Activated CD4-positive, alpha-beta T cell treated with anti-CD3 and anti-CD28 coated beads for 36 hours (primary cell): ENCODE measurements at regions of chr14 and their contacts with region 1.

Region 1: GRCh38 chr14:24630872-24631477 is 3.0 kb downstream of the GZMB start:
- DNase-seq: no peak
- ATAC-seq: peak; percentile 1
- H3K4me3 Mint-ChIP-seq: peak overlapping the region; percentile 78
- H3K27ac Mint-ChIP-seq: peak overlapping the region; percentile 88
- H3K4me1 Mint-ChIP-seq: peaks cover 12% of the 10 kb centered on the region
- H3K27me3 Mint-ChIP-seq: no peaks in the 10 kb centered on the region

Region 2: GRCh38 chr14:24518851-24519250 is 112.1 kb before region 1 on chr14:
- CTCF ChIA-PET with region 1: no interaction called
- POLR2A ChIA-PET with region 1: no interaction called
- intact Hi-C with region 1: no loop called
- DNase-seq: no peak
- ATAC-seq: no peak
- H3K4me3 Mint-ChIP-seq: no peak overlapping the region
- H3K27ac Mint-ChIP-seq: no peak overlapping the region
- H3K4me1 Mint-ChIP-seq: peaks cover 2% of the 10 kb centered on the region
- H3K27me3 Mint-ChIP-seq: peaks cover 7% of the 10 kb centered on the region

Region 3: GRCh38 chr14:24605435-24606190 is 25.4 kb before region 1 on chr14:
- CTCF ChIA-PET with region 1: interaction called, 5 read pairs
- POLR2A ChIA-PET with region 1: no interaction called
- intact Hi-C with region 1: loop called in 1 of 2 experiments (anchors 2 kb)
- DNase-seq: peak; percentile 83
- ATAC-seq: peak; percentile 87
- H3K4me3 Mint-ChIP-seq: peak overlapping the region; percentile 66
- H3K27ac Mint-ChIP-seq: peak overlapping the region; percentile 87
- H3K4me1 Mint-ChIP-seq: peaks cover 40% of the 10 kb centered on the region
- H3K27me3 Mint-ChIP-seq: no peaks in the 10 kb centered on the region

Region 4: DNA sequence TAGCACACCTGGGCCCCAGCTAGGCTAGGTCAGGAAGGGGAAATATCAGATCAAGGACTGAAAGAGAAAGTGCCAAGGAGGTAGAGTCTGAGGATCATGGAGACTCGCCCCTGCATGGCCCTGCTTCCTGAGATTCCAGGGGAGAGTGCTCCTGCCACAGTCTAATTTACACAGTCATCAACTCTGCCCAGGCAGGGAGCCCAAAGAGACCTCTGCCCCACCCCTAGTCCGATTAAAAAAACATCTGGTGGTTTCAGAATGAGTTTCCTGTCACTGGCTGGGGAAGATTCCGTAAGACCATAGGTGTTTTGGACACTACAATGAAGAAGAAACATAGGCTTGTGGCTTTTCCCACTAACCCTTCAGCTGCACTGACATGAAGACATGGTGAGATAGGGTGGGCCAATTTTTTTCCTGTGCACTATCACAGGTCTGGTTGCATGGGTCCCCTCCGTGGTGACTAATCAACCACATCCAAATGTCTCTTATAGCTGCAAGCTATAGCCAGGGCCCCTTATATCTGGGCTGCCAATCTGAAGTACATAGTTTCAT is 34.5 kb after region 1 on chr14:
- CTCF ChIA-PET with region 1: interaction called, 3 read pairs
- POLR2A ChIA-PET with region 1: interaction called, 5 read pairs
- intact Hi-C with region 1: loop called in 1 of 2 experiments (anchors 1 kb)
- DNase-seq: peak; percentile 60
- ATAC-seq: peak; percentile 80
- H3K4me3 Mint-ChIP-seq: peak overlapping the region; percentile 41
- H3K27ac Mint-ChIP-seq: peak overlapping the region; percentile 86
- H3K4me1 Mint-ChIP-seq: peaks cover 77% of the 10 kb centered on the region
- H3K27me3 Mint-ChIP-seq: no peaks in the 10 kb centered on the region

Region 5: DNA sequence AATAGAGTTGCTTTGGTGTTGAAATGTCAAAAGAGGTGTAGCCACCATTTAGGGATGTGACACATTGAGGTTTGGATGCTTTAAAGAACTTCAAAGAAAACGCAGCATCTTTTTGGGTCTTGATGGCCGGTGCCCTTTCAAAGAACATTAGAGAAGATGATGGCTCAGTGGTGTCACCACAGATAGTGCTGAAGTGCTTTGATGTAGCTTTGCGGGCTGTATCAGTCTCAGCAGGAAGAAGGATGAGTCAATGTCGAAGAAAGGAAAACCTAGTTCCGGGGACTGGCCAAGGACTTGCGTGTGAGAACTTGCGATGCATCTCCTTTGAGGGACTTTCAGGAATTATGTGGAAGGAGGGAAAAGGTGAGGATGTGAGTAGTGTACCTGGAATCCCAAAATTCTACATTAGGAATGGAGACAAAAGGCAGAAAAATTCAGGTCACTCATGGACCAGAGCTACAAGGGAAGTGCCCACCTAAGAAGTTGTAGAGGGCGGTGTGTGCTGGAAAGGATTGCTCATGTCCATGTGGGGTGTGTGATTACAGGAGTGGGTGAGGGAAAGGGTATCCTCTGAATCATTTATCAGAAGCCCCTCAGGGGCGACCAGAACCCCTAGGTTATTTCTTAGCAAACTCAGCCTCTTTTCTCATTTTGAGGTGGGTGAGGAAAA is 42.7 kb after region 1 on chr14:
- CTCF ChIA-PET with region 1: no interaction called
- POLR2A ChIA-PET with region 1: interaction called, 9 read pairs
- intact Hi-C with region 1: loop called (anchors 1 kb)
- DNase-seq: peak; percentile 82
- ATAC-seq: peak; percentile 72
- H3K4me3 Mint-ChIP-seq: peak overlapping the region; percentile 66
- H3K27ac Mint-ChIP-seq: peak overlapping the region; percentile 99
- H3K4me1 Mint-ChIP-seq: peaks cover 85% of the 10 kb centered on the region
- H3K27me3 Mint-ChIP-seq: no peaks in the 10 kb centered on the region

Region 6: GRCh38 chr14:24692382-24693352 is 61.7 kb after region 1 on chr14:
- CTCF ChIA-PET with region 1: no interaction called
- POLR2A ChIA-PET with region 1: no interaction called
- intact Hi-C with region 1: loop called in 1 of 2 experiments (anchors 1 kb)
- DNase-seq: peak; percentile 51
- ATAC-seq: peak; percentile 79
- H3K4me3 Mint-ChIP-seq: peak overlapping the region; percentile 21
- H3K27ac Mint-ChIP-seq: peak overlapping the region; percentile 81
- H3K4me1 Mint-ChIP-seq: peaks cover 17% of the 10 kb centered on the region
- H3K27me3 Mint-ChIP-seq: peaks cover 4% of the 10 kb centered on the region